ENCODE measurements at regions of chr15 and their contacts with region 1.

Region 1: DNA sequence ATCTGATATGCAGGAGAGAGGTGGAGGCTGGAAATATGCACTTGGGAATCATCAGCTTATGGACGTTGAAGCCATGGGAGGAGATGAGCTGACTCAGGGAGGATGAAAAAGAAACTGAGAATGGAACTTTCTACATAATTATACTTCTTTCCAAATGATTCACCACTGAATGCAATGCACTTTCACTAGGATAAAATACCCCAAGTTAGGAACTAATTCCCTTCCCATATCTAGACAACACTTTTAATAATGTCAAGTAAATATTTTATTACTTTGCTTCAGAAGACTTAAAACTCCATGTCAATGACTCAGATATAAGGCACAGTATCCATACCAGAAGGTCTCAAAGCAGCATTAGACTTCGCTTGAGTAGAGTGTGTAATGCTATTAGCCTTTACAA is 24.2 kb downstream of the NPTN start:
- DNase-seq: no peak
- H3K4me3 ChIP-seq: no peak overlapping the region
- H3K27ac ChIP-seq: peak overlapping the region in 1 of 2 donors; percentile 10
- H3K4me1 ChIP-seq: peaks cover 0 to 3% of the 10 kb centered on the region in 2 donors
- H3K27me3 ChIP-seq: no peaks in the 10 kb centered on the region
- CTCF ChIP-seq: no peak
- POLR2A ChIP-seq: no peak

Region 2: DNA sequence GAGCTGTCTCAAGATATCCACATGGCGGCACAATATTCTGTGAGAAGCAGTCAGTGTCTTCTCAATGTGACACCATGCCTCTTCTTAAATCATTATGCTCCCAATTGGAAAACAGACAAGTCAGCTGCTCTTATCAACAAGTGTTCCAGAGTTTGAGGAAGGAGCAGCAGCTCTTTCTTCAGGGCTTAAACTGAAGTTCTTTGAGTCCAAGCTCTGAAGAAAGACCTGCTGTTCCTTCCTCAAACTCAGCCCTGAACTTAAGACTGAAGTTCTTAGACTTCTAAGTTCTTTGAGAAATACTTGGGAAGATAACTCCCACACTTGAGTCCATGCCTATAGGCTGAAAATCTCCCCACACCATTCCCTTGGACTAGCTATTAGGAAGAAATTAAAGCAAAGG is 19.2 kb before region 1 on chr15:
- intact Hi-C with region 1: loop called (anchors 1 kb)
- DNase-seq: no peak
- H3K4me3 ChIP-seq: no peak overlapping the region
- H3K27ac ChIP-seq: no peak overlapping the region
- H3K4me1 ChIP-seq: no peaks in the 10 kb centered on the region
- H3K27me3 ChIP-seq: no peaks in the 10 kb centered on the region
- CTCF ChIP-seq: no peak
- POLR2A ChIP-seq: no peak

Region 3: GRCh38 chr15:73684581-73685455 is 75.9 kb after region 1 on chr15:
- intact Hi-C with region 1: no loop called
- DNase-seq: no peak
- H3K4me3 ChIP-seq: peak overlapping the region; percentile 80 to 90 (median 83)
- H3K27ac ChIP-seq: peak overlapping the region; percentile 83 to 87
- H3K4me1 ChIP-seq: peaks cover 0 to 10% of the 10 kb centered on the region in 2 donors
- H3K27me3 ChIP-seq: no peaks in the 10 kb centered on the region
- CTCF ChIP-seq: no peak
- POLR2A ChIP-seq: no peak

Measured in breast epithelium (tissue), 4 donors.